Endothelial cell of umbilical vein (primary cell): ENCODE measurements at regions of chr1 and their contacts with region 1.

Region 1: GRCh38 chr1:156160743-156161171 is 7.4 kb downstream of the SEMA4A start:
- DNase-seq: peak; percentile 78
- H3K4me3 ChIP-seq: no peak overlapping the region
- H3K27ac ChIP-seq: peak overlapping the region; percentile 9
- H3K4me1 ChIP-seq: peaks cover 20% of the 10 kb centered on the region
- H3K27me3 ChIP-seq: no peaks in the 10 kb centered on the region
- CTCF ChIP-seq: no peak
- POLR2A ChIP-seq: no peak

Region 2: GRCh38 chr1:156193488-156194299 is 32.9 kb after region 1 on chr1 and contains the start of gene SLC25A44:
- CTCF ChIA-PET with region 1: interaction called, 10 read pairs
- POLR2A ChIA-PET with region 1: no interaction called
- dilution Hi-C with region 1: no loop called
- intact Hi-C with region 1: loop called (anchors 2 kb)
- DNase-seq: peak; percentile 100
- H3K4me3 ChIP-seq: peak within 1 kb of the TSS; percentile 33 to 86 (median 64)
- H3K27ac ChIP-seq: peak within 1 kb of the TSS; percentile 86
- H3K4me1 ChIP-seq: peaks cover 9% of the 10 kb centered on the region
- H3K27me3 ChIP-seq: no peaks in the 10 kb centered on the region
- CTCF ChIP-seq: peak; percentile 27 to 53
- POLR2A ChIP-seq: peak; percentile 85
- total RNA-seq, gene SLC25A44: 24.0 and 26.3 TPM in 2 replicates